Vagina (tissue), 2 donors: ENCODE measurements at regions of chr3 and their contacts with region 1.

Region 1: DNA sequence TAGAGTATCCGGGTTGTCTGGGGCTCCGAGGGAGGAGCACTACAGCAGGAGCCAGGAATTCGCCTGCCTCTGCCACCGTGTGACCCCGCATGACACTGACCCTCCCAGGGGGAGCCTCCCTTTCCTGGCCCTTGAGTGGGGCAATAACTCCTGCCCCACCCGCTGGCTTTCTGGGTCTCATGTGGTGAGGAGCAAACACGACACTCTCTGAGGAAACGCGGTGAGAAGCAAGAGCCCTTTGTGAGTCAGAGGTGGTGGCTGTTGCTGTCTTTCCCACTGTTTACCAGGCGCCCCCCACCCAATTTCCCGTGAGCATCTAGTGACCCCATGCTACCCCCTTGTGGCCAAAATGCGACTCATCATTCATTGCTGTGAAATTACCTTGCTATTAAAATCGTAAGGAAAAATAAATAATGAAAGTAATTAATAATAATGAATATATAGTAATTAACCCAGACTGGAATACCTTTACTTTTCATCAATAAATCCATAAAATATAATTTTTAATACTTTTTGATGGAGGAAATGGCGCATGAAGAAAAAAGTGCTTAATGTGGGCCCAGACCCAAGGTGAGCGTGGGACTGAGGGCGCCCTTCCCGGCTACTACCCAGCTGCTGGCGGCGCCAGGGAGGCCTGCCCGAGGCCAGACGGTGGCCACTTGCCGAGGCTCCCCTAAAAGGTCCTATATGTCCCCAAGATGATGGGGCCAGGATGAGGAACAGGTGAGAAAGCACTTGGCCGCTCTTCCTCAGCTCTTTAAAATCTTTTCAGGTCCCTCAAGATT is 29.3 kb downstream of the CCNL1 start:
- DNase-seq: no peak
- H3K4me3 ChIP-seq: peak overlapping the region in 1 of 2 donors; percentile 17
- H3K27ac ChIP-seq: peak overlapping the region; percentile 67
- H3K4me1 ChIP-seq: peaks cover 33% of the 10 kb centered on the region
- H3K27me3 ChIP-seq: no peaks in the 10 kb centered on the region
- CTCF ChIP-seq: peak in 2 of 3 experiments; percentile 35 to 72
- POLR2A ChIP-seq: no peak

Region 2: DNA sequence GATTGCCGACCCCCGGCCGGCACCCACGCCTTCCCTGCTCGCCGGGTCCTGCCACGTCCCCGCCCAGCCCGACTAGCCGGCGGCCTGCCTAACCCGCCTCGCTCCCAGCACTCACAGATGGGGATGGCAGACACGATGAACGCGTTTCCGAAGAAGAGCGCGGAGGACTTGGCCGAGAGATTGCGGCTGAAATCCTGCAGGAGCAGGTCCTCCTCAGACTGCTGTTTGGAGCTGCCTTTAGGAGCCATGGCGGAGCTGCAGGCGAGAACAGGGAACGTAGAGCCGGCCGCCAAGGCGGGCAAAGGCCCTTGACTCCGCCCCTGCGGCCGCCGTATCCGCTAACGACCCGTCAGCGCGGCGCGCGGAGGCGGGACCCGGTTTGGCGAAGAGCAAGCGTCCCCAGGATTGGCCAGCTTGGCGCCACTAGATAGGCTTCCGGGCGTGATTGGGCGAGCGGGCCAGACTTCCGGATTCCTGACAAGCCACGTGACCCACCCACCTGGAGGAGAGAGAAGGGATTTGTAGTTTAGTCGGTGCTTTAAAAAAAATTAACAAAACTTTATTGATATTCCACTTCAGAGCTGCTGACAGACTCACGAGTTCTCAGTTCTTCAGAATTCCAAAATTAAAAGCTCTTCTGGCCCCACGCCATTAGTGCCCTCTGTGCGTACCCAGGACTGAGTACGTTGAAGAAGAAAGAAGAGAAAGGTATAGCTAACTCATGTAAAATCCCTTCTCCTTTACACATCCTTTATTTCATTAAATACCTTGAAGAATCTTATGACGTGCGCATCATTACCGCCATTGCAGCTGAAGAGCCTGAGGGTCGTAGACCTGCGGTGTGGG is 575.6 kb before region 1 on chr3 and contains the start of gene SSR3:
- intact Hi-C with region 1: loop called (anchors 10 kb)
- DNase-seq: peak; percentile 98 to 99
- H3K4me3 ChIP-seq: peak within 1 kb of the TSS; percentile 79 to 85
- H3K27ac ChIP-seq: peak within 1 kb of the TSS; percentile 76
- H3K4me1 ChIP-seq: peaks cover 45% of the 10 kb centered on the region
- H3K27me3 ChIP-seq: no peaks in the 10 kb centered on the region
- CTCF ChIP-seq: peak in 1 of 3 experiments; percentile 64
- POLR2A ChIP-seq: peak in 1 of 2 donors; percentile 60
- total RNA-seq, gene SSR3: 68.0 TPM

Region 3: GRCh38 chr3:156826144-156826895 is 304.3 kb before region 1 on chr3 and contains the start of gene LEKR1:
- intact Hi-C with region 1: loop called (anchors 10 kb)
- DNase-seq: no peak
- H3K4me3 ChIP-seq: peak within 1 kb of the TSS; percentile 65 to 75
- H3K27ac ChIP-seq: peak within 1 kb of the TSS; percentile 88
- H3K4me1 ChIP-seq: peaks cover 6% of the 10 kb centered on the region
- H3K27me3 ChIP-seq: no peaks in the 10 kb centered on the region
- CTCF ChIP-seq: no peak
- POLR2A ChIP-seq: peak in 1 of 2 donors; percentile 48
- total RNA-seq, gene LEKR1: not detected

Region 4: DNA sequence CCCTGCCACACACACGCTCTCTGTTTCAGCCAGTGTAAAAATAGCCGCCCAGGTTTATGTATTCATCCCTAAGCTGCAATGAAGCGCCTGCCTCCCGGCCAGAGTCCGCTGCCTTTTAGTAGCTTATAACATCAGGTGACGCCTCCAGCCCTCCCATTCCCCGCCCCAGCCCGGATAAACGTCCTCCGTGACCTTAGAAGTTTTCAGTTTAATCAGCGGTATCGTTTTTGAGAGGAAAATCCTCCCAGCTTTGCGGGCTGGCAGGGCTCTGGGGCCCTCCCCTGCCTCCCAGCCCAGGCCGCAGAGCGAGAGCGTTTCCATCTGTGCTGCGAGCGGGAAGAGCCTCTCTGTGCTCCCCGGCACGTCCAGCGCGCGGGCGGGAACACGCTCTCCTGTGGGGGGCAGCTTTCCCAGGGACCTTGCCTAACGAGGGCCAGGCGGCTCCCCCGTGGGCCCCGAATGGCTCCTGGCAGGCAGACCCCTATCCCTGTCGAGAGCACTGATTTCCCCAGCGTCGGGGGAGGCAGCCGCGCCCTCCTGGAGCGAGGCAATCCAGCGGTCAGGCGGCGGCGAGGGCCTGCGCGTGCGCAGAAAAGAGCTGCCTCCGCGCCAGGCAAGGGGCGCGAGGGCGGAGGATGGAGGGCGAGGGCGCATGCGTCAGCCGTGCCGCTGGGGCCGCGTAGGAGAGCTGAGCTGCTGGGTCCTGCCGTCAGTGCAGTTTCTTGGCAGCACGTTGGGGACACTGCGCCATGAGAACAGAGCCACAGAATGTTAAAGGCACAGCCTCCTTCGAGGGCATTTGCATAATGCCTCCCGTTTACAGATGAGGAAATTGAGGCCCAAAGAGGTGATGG is 41.8 kb before region 1 on chr3:
- intact Hi-C with region 1: loop called (anchors 2 kb)
- DNase-seq: peak in 1 of 2 donors; percentile 99
- H3K4me3 ChIP-seq: peak overlapping the region; percentile 55 to 76
- H3K27ac ChIP-seq: peak overlapping the region; percentile 96
- H3K4me1 ChIP-seq: peaks cover 36% of the 10 kb centered on the region
- H3K27me3 ChIP-seq: no peaks in the 10 kb centered on the region
- CTCF ChIP-seq: no peak
- POLR2A ChIP-seq: peak in 1 of 2 donors; percentile 65

Region 5: DNA sequence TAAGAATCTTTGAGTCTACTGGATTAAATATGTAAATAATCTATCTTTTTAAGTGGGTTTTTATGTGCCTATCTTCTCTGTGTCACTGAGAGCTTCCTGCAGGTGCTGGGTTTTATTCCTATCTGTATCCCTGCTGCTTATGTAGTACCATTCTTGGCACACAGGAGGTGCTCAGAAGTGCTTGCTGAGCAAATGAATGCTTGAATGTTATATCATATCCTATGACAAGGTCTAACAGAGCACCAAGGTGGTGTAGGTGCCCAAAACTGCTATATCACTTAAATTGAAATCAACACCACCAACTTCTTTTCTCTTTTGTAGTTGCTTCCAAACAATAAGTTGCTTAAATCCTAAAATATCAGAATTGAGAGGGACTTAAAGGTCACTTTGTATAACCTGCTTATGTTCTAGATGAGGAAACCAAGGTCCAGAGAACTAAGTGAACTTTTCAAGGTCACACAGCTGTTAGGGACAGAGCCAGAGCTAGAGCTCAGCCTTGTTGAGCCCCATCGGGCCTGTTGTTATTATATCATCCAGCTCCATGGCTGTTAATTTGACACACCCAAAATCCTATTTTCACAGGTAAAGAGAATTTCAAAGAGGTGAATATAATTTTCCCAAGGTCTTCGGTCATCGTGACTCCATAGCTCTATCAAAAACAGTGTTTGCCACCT is 16.7 kb before region 1 on chr3:
- intact Hi-C with region 1: no loop called
- DNase-seq: no peak
- H3K4me3 ChIP-seq: no peak overlapping the region
- H3K27ac ChIP-seq: no peak overlapping the region
- H3K4me1 ChIP-seq: no peaks in the 10 kb centered on the region
- H3K27me3 ChIP-seq: no peaks in the 10 kb centered on the region
- CTCF ChIP-seq: no peak
- POLR2A ChIP-seq: no peak